Adrenal gland (tissue), 19 donors: ENCODE measurements at regions of chr19 and their contacts with region 1.

Region 1: DNA sequence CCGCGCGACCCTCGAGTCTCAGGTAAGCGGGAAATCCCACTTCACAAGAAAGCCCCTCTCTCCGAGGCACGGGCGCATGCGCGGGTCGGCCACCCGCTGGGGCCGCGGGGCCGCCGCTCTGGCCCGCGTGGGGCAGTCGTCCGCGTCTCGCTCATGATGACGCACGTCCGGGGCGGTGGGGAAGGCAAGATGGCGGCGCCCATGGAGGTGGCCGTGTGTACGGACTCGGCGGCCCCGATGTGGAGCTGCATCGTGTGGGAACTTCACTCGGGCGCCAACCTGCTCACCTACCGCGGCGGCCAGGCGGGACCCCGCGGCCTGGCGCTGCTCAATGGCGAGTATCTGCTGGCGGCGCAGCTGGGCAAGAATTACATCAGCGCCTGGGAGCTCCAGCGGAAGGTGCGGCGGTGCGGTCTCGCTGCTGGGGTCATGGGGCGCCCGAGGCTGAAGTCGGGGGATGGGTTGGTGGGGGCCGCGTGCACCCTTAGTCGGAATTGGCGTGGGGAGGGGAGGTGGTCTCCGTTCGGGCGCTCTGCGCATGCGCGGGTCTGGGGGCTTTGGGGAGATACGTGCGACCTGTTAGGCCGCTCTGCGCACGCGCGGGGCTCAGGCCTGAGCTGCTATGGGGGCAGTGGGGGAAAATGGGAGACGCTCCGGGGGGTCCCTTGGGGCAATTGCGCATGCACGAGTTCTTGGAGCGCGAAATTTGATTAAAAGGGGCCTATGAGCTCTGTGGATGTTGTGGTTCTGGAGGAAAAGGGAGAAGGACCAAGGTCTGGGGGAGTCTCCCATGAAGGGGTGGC is at the start of gene WDR18:
- DNase-seq: peak; percentile 92 to 96 (median 94)
- H3K4me3 ChIP-seq: peak within 1 kb of the TSS; percentile 48 to 99 (median 83)
- H3K27ac ChIP-seq: peak within 1 kb of the TSS; percentile 48 to 93 (median 81)
- H3K4me1 ChIP-seq: peaks cover 5 to 26% of the 10 kb centered on the region in 2 donors
- H3K27me3 ChIP-seq: no peaks in the 10 kb centered on the region
- CTCF ChIP-seq: peak in 4 of 6 experiments; percentile 21 to 41 (median 27)
- POLR2A ChIP-seq: peak; percentile 61 to 76
- total RNA-seq, gene WDR18: 24.2 to 78.7 (median 52.1) TPM

Region 2: GRCh38 chr19:869245-870177 is 114.9 kb before region 1 on chr19:
- intact Hi-C with region 1: loop called in 1 of 2 experiments (anchors 5 kb)
- DNase-seq: peak; percentile 61 to 88 (median 79)
- H3K4me3 ChIP-seq: no peak overlapping the region
- H3K27ac ChIP-seq: peak overlapping the region; percentile 46 to 91 (median 70)
- H3K4me1 ChIP-seq: peaks cover 12 to 18% of the 10 kb centered on the region in 2 donors
- H3K27me3 ChIP-seq: no peaks in the 10 kb centered on the region
- CTCF ChIP-seq: no peak
- POLR2A ChIP-seq: no peak

Region 3: GRCh38 chr19:924943-925525 is 59.3 kb before region 1 on chr19:
- intact Hi-C with region 1: loop called (anchors 1 to 5 kb)
- DNase-seq: peak in 3 of 7 donors; percentile 46 to 54 (median 53)
- H3K4me3 ChIP-seq: peak overlapping the region in 3 of 4 donors; percentile 16 to 73 (median 71)
- H3K27ac ChIP-seq: peak overlapping the region in 4 of 5 donors; percentile 29 to 81 (median 76)
- H3K4me1 ChIP-seq: peaks cover 13% of the 10 kb centered on the region in 2 donors
- H3K27me3 ChIP-seq: peaks cover 13% of the 10 kb centered on the region
- CTCF ChIP-seq: no peak
- POLR2A ChIP-seq: no peak

Region 4: DNA sequence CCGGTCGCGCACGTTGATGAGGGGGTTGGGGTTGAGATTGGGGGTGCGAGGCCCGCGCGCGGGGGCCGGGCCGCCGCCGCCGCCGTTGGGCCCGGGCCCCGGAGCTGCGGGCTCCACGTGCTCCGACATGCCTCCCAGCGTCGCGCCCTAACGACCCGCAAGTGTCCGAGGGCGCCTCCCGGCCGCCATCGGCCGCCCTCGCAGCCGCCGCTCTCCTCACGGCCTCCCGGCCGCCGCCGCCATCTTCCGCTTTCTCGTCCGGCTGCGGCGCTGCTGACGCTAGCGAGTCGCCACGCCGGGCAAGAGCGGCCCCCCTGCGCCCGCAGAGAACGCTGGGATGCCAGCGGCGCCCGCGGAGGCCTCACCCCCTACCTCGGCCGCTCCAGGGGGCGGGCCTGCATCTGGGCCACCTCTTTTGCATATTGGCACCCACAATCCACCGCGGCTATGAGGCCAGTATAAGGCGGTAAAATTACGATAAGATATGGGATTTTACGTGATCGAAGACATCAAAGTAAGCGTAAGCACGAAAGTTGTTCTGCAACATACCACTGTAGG is 36.6 kb after region 1 on chr19 and contains the start of gene TMEM259:
- intact Hi-C with region 1: no loop called
- DNase-seq: peak; percentile 97 to 99 (median 98)
- H3K4me3 ChIP-seq: peak within 1 kb of the TSS; percentile 62 to 99 (median 78)
- H3K27ac ChIP-seq: peak within 1 kb of the TSS; percentile 74 to 99 (median 90)
- H3K4me1 ChIP-seq: peaks cover 27 to 48% of the 10 kb centered on the region in 2 donors
- H3K27me3 ChIP-seq: no peaks in the 10 kb centered on the region
- CTCF ChIP-seq: no peak
- POLR2A ChIP-seq: peak; percentile 64 to 86
- total RNA-seq, gene TMEM259: 94.1 to 308 (median 182) TPM